ENCODE measurements at regions of chr1 and their contacts with region 1.

Region 1: DNA sequence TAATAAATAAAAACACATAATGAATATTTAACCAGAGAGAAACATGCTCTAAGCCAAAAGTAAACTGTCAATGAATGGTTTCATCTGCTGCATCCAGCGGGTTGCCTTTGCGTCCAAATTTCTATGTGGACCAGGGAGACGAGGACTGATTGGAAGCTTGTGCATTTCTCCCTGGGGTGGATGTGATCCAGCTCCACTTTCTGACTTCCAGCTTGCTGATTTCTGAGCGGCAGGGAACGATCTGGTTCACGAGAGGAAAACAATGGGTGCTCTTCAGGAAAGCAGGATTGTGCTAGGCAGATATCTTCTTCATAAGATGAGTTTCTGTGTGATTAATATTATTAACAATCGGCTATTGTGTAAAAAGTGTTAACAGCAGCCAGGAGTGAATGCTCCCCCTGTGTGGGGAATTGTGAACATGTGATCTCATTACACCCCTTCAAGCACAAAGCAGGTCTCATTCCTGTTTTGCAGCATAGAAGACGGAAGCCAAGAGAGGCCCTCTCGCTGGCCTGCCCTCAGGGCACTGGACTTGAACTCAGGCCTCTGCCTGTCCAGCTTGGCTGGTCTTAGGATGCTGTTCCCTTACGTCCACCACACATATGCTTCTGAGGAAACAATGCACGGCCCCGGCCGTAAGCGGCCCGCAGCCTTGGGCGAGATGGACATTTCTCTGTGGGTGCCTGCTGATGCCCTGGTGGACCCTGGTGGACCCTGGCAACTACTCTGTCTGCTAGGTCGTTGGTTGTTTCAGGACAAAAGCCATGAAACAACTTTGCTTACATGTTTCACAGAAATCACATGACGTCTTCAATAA is 183.4 kb upstream of the C1orf174 start:
- DNase-seq: no peak
- ATAC-seq: no peak
- H3K4me3 Mint-ChIP-seq: no peak overlapping the region
- H3K27ac Mint-ChIP-seq: no peak overlapping the region
- H3K4me1 Mint-ChIP-seq: no peaks in the 10 kb centered on the region
- H3K27me3 Mint-ChIP-seq: no peaks in the 10 kb centered on the region
- CTCF ChIP-seq: no peak

Region 2: GRCh38 chr1:3763351-3764125 is 319.9 kb before region 1 on chr1:
- CTCF ChIA-PET with region 1: no interaction called
- POLR2A ChIA-PET with region 1: no interaction called
- intact Hi-C with region 1: no loop called
- DNase-seq: no peak
- ATAC-seq: no peak
- H3K4me3 Mint-ChIP-seq: no peak overlapping the region
- H3K27ac Mint-ChIP-seq: no peak overlapping the region
- H3K4me1 Mint-ChIP-seq: no peaks in the 10 kb centered on the region
- H3K27me3 Mint-ChIP-seq: peaks cover 16% of the 10 kb centered on the region
- CTCF ChIP-seq: no peak

Region 3: DNA sequence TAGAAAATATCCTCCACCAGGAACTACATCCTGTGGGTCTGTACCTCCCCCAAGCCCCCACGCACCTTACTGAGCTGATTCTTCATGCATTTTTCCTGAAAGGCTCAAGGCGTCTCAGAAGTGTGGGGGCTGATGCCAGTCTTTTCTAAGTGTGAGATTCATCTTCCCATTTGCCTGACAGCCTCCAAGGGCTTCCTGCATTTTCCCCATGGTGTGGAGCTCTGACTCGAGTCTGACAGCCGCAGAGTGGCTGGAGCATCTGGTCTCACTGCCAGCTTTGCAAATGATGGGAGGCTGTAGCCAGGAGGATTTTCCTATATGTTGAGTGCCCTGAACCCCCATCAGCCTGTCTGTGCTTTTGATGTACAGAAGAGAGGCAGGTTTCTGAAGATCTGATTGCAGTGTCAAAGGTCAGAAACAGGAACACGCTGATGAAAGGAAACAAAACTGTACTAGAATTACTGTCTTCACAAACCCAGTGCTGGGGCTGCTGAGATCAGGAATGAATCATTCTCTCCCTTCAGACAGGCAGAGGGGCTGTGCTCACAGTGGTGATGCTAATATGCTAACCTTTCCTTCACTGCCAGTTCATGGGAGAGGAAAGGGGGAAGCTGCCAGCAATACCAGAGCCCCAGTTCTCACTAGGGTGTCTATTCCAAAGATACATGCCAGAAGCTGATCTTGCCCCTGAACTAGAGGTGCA is 18.2 kb after region 1 on chr1:
- CTCF ChIA-PET with region 1: no interaction called
- POLR2A ChIA-PET with region 1: no interaction called
- intact Hi-C with region 1: loop called (anchors 1 kb)
- DNase-seq: no peak
- ATAC-seq: peak; percentile 61
- H3K4me3 Mint-ChIP-seq: no peak overlapping the region
- H3K27ac Mint-ChIP-seq: no peak overlapping the region
- H3K4me1 Mint-ChIP-seq: no peaks in the 10 kb centered on the region
- H3K27me3 Mint-ChIP-seq: peaks cover 8% of the 10 kb centered on the region
- CTCF ChIP-seq: no peak